HCT116 (cell line): ENCODE measurements at regions of chr1 and their contacts with region 1.

Region 1: DNA sequence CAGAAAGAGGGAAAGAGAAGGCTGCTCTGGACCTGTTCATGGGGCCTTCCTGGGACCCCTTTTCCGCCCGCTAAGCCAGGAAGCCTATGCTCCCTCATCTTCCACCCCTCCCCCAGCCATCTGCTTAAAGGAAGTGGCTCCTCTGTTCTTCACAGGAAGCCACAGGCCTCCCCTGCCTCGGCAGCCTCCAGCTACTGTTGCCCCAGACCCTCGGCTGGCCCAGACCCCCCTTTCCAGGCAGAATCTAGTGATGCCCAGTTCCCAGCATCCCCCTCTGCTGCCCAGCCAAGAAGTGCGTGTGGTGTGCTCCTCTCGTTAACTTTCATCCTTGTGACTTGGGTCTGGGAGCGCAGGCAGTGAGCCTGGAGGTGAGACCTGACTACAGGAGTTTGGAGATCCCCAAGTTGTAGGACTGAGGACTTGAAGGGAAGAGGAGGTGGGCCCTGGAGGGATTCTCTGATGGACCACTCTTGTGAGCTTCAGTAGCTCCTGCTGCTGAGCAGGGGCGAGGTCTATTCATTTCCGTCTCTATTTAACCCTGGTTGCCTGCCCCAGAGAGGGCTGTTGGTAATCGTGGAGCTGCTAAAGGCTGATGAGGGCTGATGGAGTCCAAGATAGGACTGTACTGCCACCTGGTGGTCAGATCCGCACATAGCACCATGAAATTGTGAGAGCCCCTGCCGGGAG is 9.1 kb downstream of the IFI6 start:
- DNase-seq: peak; percentile 54
- ATAC-seq: peak; percentile 59
- H3K4me3 ChIP-seq: no peak overlapping the region
- H3K27ac ChIP-seq: peak overlapping the region; percentile 43
- H3K4me1 ChIP-seq: peaks cover 35 to 58% of the 10 kb centered on the region in 2 experiments
- H3K27me3 ChIP-seq: no peaks in the 10 kb centered on the region
- CTCF ChIP-seq: peak; percentile 81 to 96 (median 89)
- POLR2A ChIP-seq: no peak
- RAD21 ChIP-seq: peak; percentile 95

Region 2: GRCh38 chr1:26754086-26754874 is 908.6 kb before region 1 on chr1:
- CTCF ChIA-PET with region 1: no interaction called
- POLR2A ChIA-PET with region 1: no interaction called
- RAD21 ChIA-PET with region 1: no interaction called
- intact Hi-C with region 1: no loop called
- DNase-seq: no peak
- ATAC-seq: peak; percentile 40; the same call in 1 of the 2 replicates
- H3K4me3 ChIP-seq: no peak overlapping the region
- H3K27ac ChIP-seq: no peak overlapping the region
- H3K4me1 ChIP-seq: peaks cover 5 to 41% of the 10 kb centered on the region in 2 experiments
- H3K27me3 ChIP-seq: no peaks in the 10 kb centered on the region
- CTCF ChIP-seq: no peak
- POLR2A ChIP-seq: no peak
- RAD21 ChIP-seq: no peak

Region 3: DNA sequence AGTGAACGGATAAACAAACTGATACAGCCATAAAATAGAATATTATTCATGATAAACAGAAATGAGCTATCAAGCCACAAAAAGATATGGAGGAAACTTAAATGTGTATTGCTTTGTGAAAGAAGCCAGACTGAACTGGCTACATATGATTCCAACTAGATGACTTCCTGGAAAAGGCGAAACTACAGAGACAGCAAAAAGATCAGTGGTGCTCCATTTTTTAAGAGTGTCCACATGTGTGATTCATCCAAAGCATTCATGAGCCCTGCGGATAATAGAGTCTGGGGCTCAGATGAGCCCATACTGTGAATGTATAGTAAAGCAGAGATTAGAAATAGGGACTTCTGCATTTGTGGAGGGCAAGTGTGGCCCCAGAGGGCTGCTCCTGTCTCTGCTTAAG is 348.7 kb before region 1 on chr1:
- CTCF ChIA-PET with region 1: no interaction called
- POLR2A ChIA-PET with region 1: no interaction called
- RAD21 ChIA-PET with region 1: no interaction called
- intact Hi-C with region 1: loop called (anchors 5 kb)
- DNase-seq: no peak
- ATAC-seq: no peak
- H3K4me3 ChIP-seq: no peak overlapping the region
- H3K27ac ChIP-seq: no peak overlapping the region
- H3K4me1 ChIP-seq: peaks cover 0 to 4% of the 10 kb centered on the region in 2 experiments; a peak in 1 of 4 replicates
- H3K27me3 ChIP-seq: no peaks in the 10 kb centered on the region
- CTCF ChIP-seq: no peak
- POLR2A ChIP-seq: no peak
- RAD21 ChIP-seq: no peak

Region 4: GRCh38 chr1:27416387-27417111 is 246.3 kb before region 1 on chr1:
- CTCF ChIA-PET with region 1: interaction called, 6 read pairs
- POLR2A ChIA-PET with region 1: no interaction called
- RAD21 ChIA-PET with region 1: no interaction called
- intact Hi-C with region 1: loop called (anchors 5 kb)
- DNase-seq: peak; percentile 55
- ATAC-seq: peak; percentile 90
- H3K4me3 ChIP-seq: no peak overlapping the region
- H3K27ac ChIP-seq: no peak overlapping the region
- H3K4me1 ChIP-seq: no peaks in the 10 kb centered on the region
- H3K27me3 ChIP-seq: no peaks in the 10 kb centered on the region
- CTCF ChIP-seq: peak; percentile 52 to 84 (median 79); a peak in 5 of 6 replicates
- POLR2A ChIP-seq: no peak
- RAD21 ChIP-seq: peak; percentile 74

Region 5: GRCh38 chr1:27603681-27604578 is 58.9 kb before region 1 on chr1 and contains the start of gene AHDC1:
- CTCF ChIA-PET with region 1: interaction called, 74 read pairs
- POLR2A ChIA-PET with region 1: interaction called, 5 read pairs
- RAD21 ChIA-PET with region 1: interaction called, 17 to 25 read pairs
- intact Hi-C with region 1: loop called (anchors 1 kb)
- DNase-seq: peak; percentile 65
- ATAC-seq: peak; percentile 74
- H3K4me3 ChIP-seq: peak within 1 kb of the TSS; percentile 85 to 95
- H3K27ac ChIP-seq: peak within 1 kb of the TSS; percentile 68
- H3K4me1 ChIP-seq: peaks cover 40 to 70% of the 10 kb centered on the region in 2 experiments
- H3K27me3 ChIP-seq: no peaks in the 10 kb centered on the region
- CTCF ChIP-seq: no peak
- POLR2A ChIP-seq: peak; percentile 34
- RAD21 ChIP-seq: no peak
- total RNA-seq, gene AHDC1: 33.7 TPM

Region 6: GRCh38 chr1:27643701-27644625 is 18.9 kb before region 1 on chr1:
- CTCF ChIA-PET with region 1: interaction called, 13 read pairs
- POLR2A ChIA-PET with region 1: no interaction called
- RAD21 ChIA-PET with region 1: interaction called, 3 read pairs
- intact Hi-C with region 1: no loop called
- DNase-seq: peak; percentile 54
- ATAC-seq: peak; percentile 96
- H3K4me3 ChIP-seq: peak overlapping the region; percentile 23 to 36
- H3K27ac ChIP-seq: no peak overlapping the region
- H3K4me1 ChIP-seq: peaks cover 0 to 19% of the 10 kb centered on the region in 2 experiments; a peak in 2 of 4 replicates
- H3K27me3 ChIP-seq: no peaks in the 10 kb centered on the region
- CTCF ChIP-seq: peak; percentile 86 to 95 (median 88)
- POLR2A ChIP-seq: no peak
- RAD21 ChIP-seq: peak; percentile 66; the same call in 1 of the 2 replicates